Left colon (tissue), 2 donors: ENCODE measurements at regions of chr15 and their contacts with region 1.

Region 1: DNA sequence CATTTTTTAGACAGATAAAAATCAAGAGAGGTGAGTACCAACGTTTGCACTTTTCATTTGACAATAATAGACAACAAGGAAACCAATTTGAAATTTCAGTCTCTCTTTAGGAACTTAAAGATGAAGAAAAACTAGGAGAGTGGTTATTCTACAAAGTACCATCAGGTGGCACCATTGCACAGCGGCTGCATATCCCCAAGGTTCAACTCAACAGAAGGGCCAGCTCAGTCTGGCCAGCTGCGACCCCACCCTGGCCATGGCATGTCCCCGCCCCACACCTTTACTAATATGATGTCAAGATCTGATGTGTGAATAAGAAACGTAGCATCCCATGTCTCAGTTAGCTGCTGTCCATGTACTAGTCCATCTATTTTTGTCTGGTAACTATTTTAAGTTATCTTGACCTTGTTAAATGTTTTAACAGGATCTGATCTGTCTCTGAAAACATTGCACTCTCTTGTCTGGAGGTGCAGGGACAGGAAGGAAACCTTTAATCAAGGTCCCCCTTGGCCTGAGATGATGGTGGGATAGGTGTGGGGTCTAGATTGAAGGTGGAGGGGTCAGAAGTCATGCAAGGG is 35.5 kb upstream of the CGNL1 start:
- DNase-seq: no peak
- ATAC-seq: peak; percentile 82

Region 2: GRCh38 chr15:57060799-57061198 is 280.0 kb before region 1 on chr15:
- intact Hi-C with region 1: no loop called
- DNase-seq: no peak
- ATAC-seq: peak; percentile 35

Region 3: DNA sequence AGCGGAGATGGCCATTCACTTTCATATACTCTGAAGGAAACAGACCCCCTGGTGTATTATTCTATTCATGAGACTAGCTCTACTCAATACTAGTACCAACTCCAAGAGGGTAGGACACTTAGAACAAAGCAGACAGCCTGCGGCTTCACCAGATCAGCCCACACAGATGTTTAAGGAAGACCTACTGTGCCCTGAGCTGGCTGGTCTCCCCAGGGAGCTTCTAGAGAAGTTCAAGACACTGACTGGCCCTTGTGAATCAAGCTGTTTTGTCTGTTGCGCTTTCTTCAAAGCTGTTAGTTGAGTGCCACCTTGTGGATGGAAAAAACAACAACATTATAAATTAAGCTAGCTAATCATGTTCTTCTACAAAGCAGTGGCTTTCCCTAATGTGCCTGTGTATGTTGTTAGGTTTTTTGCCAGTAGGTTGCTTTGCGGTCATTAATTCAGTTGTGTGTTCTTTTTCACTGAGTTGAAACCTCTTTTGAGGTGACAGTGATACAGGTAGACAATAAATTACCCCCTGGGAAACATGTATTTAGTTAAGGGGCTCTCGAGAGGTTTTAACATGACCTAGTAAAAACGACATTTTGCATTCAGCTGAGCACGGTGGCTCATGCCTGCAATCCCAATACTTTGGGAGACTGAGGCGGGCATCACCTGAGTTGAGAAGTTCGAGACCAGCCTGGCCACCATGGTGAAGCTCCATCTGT is 186.8 kb after region 1 on chr15:
- intact Hi-C with region 1: loop called (anchors 2 to 5 kb)
- DNase-seq: no peak
- ATAC-seq: peak; percentile 76

Region 4: GRCh38 chr15:57541805-57542504 is 201.2 kb after region 1 on chr15:
- intact Hi-C with region 1: loop called in 1 of 2 experiments (anchors 5 kb)
- DNase-seq: peak; percentile 59 to 86
- ATAC-seq: peak; percentile 60